ENCODE measurements at regions of chr19 and their contacts with region 1.

Region 1: DNA sequence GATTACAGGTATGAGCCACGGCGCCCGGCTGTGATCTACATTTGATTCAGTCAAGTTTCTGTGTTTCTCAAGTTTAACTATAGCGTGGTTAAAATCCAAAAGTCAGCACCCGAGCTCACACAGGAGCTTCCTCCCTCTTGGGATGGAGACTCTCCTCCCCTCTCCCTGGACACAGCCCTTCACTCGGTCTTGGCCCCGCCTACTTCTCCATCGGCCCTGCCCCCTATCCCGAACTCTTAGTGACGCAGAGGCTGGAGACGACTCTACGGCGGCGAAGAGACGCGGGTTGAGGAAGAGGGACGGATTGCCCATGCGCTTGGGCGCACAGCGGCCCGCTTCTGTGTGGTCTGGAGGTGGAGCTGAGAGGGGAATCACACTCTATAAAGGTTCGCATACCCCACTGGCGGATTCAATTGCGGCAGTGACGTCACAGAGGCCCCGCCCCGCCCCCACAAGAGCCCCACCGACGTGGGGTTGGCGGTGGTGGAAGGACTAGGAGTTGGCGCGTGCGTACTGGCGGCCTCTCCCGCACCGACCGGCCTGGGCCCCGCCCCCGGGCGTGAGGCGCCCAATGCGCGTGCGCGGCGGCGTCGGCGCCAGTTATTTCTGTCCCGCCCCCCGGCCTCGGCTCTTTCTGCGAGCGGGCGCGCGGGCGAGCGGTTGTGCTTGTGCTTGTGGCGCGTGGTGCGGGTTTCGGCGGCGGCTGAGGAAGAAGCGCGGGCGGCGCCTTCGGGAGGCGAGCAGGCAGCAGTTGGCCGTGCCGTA is at the start of gene TRIM28:
- DNase-seq: peak; percentile 100
- H3K4me3 Mint-ChIP-seq: peak within 1 kb of the TSS; percentile 97
- H3K27ac Mint-ChIP-seq: peak within 1 kb of the TSS; percentile 97
- H3K4me1 Mint-ChIP-seq: peaks cover 30% of the 10 kb centered on the region
- H3K27me3 Mint-ChIP-seq: peaks cover 15% of the 10 kb centered on the region
- total RNA-seq, gene TRIM28: 475 to 483 TPM

Region 2: GRCh38 chr19:58279042-58279924 is 264.7 kb before region 1 on chr19:
- CTCF ChIA-PET with region 1: no interaction called
- intact Hi-C with region 1: no loop called
- DNase-seq: peak; percentile 81
- H3K4me3 Mint-ChIP-seq: peak overlapping the region; percentile 88
- H3K27ac Mint-ChIP-seq: peak overlapping the region; percentile 93
- H3K4me1 Mint-ChIP-seq: peaks cover 25% of the 10 kb centered on the region
- H3K27me3 Mint-ChIP-seq: no peaks in the 10 kb centered on the region

Region 3: GRCh38 chr19:58305065-58305931 is 238.7 kb before region 1 on chr19 and contains the start of gene ERVK3-1:
- CTCF ChIA-PET with region 1: no interaction called
- intact Hi-C with region 1: loop called (anchors 1 kb)
- DNase-seq: peak; percentile 95
- H3K4me3 Mint-ChIP-seq: peak within 1 kb of the TSS; percentile 100
- H3K27ac Mint-ChIP-seq: peak within 1 kb of the TSS; percentile 99
- H3K4me1 Mint-ChIP-seq: peaks cover 46% of the 10 kb centered on the region
- H3K27me3 Mint-ChIP-seq: no peaks in the 10 kb centered on the region
- total RNA-seq, gene ERVK3-1: 24.5 to 27.7 TPM

Region 4: GRCh38 chr19:58572818-58573657 is 29.0 kb after region 1 on chr19 and contains the start of gene MZF1:
- CTCF ChIA-PET with region 1: no interaction called
- intact Hi-C with region 1: loop called (anchors 1 kb)
- DNase-seq: peak; percentile 100
- H3K4me3 Mint-ChIP-seq: peak within 1 kb of the TSS; percentile 96
- H3K27ac Mint-ChIP-seq: peak within 1 kb of the TSS; percentile 99
- H3K4me1 Mint-ChIP-seq: peaks cover 39% of the 10 kb centered on the region
- H3K27me3 Mint-ChIP-seq: no peaks in the 10 kb centered on the region
- total RNA-seq, gene MZF1: 13.3 to 13.4 TPM

Measured in activated naive CD4-positive, alpha-beta T cell treated with anti-CD3 and anti-CD28 coated beads for 36 hours (primary cell).